AG04450 (cell line): ENCODE measurements at regions of chr15 and their contacts with region 1.

Region 1: DNA sequence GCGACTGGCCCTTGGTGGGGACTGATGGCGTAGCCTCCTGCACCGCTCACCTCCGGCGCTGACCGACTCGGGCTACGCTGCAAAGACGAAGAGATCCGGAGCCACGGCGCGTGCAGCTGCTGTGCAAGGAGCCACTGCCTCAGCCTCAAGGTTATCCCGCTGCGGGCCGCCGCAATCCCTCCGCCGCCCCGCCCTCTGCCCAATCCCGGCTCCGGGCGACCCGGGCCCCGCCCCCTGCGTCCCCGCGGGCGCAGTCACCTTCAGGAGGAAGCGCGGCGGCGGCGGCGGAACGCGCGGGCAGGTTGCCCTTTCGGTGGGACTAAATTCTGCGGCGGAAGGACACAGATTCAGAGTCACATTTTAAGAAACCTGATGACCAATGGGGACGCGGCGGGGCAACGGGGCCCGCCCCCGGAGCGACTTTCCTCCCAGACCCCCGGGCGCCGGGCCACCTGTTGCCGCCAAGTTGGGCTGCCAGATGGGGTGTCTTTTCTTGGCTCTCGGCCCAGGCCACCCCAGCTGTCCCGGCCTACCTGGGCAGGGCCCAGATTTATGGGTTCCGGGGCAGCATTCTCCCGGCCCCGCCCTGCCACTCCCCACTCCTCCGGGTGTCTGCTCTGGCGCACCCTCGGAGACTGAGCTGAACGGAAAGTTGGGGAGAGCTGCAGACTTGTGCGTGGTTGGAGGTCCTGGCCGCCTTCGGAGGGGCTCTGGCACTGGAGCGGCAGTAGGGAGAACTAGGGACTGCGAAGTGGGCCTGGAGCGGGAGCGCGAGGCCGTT is at the start of gene PKM:
- DNase-seq: peak; percentile 91
- H3K4me3 ChIP-seq: peak within 1 kb of the TSS; percentile 96
- H3K27ac ChIP-seq: peak within 1 kb of the TSS; percentile 93
- H3K27me3 ChIP-seq: no peaks in the 10 kb centered on the region
- CTCF ChIP-seq: no peak
- polyA plus RNA-seq, gene PKM: 1,954 and 2,130 TPM in 2 replicates

Region 2: GRCh38 chr15:71773206-71773859 is 457.9 kb before region 1 on chr15:
- CTCF ChIA-PET with region 1: no interaction called
- POLR2A ChIA-PET with region 1: interaction called, 13 read pairs
- DNase-seq: no peak
- H3K4me3 ChIP-seq: no peak overlapping the region
- H3K27ac ChIP-seq: no peak overlapping the region
- H3K27me3 ChIP-seq: no peaks in the 10 kb centered on the region
- CTCF ChIP-seq: no peak

Region 3: DNA sequence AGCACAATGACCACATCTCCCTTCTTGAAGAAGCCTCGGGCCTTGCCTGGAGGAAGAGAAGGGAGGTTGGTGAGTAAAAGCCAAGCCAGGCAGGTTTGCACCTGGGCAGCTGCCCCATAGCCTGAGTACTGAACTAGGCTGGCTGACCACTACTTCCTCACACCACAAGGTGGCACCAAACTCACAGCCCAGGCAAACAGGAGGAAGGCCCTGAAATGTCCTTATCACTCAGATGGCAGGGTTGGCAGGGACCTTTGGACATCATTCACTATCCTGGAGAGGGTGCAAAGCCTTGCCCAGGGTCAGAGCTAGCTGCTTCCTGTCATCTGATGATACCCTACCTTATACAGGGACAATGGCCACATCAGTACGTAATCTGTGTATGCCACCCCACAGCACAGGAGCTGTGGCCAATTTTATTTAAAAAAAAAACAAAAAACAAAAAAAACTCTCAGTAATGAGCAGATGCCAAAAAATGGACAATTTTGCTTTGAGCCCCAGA is 31.5 kb before region 1 on chr15:
- CTCF ChIA-PET with region 1: interaction called, 13 read pairs
- POLR2A ChIA-PET with region 1: interaction called, 14 read pairs
- DNase-seq: peak; percentile 47
- H3K4me3 ChIP-seq: no peak overlapping the region
- H3K27ac ChIP-seq: peak overlapping the region; percentile 3
- H3K27me3 ChIP-seq: no peaks in the 10 kb centered on the region
- CTCF ChIP-seq: peak; percentile 96

Region 4: GRCh38 chr15:72289545-72290325 is 58.5 kb after region 1 on chr15:
- CTCF ChIA-PET with region 1: no interaction called
- POLR2A ChIA-PET with region 1: no interaction called
- DNase-seq: no peak
- H3K4me3 ChIP-seq: no peak overlapping the region
- H3K27ac ChIP-seq: no peak overlapping the region
- H3K27me3 ChIP-seq: peaks cover 23% of the 10 kb centered on the region
- CTCF ChIP-seq: no peak

Region 5: DNA sequence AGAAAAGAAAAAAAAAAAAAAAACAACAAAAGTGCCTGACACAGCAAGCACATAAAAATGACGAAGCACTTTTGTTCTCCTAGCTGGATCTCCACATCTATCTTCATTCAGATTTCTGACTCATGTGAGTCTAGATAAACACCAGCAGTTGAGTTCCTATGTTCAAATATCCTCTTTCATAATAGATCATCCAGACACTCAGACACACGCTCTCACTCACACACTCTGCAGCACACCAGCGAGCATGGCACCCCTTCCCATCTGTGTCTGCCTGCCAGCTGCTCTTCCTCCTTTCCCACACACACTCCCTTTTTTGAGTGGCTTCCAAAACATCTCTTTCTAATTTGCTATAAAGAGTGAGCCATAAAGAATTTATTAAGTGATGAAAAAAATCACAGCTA is 108.5 kb after region 1 on chr15:
- CTCF ChIA-PET with region 1: no interaction called
- POLR2A ChIA-PET with region 1: interaction called, 19 read pairs
- DNase-seq: peak; percentile 80
- H3K4me3 ChIP-seq: no peak overlapping the region
- H3K27ac ChIP-seq: peak overlapping the region; percentile 87
- H3K27me3 ChIP-seq: no peaks in the 10 kb centered on the region
- CTCF ChIP-seq: no peak